Breast epithelium (tissue), 4 donors: ENCODE measurements at regions of chr2 and their contacts with region 1.

Region 1: DNA sequence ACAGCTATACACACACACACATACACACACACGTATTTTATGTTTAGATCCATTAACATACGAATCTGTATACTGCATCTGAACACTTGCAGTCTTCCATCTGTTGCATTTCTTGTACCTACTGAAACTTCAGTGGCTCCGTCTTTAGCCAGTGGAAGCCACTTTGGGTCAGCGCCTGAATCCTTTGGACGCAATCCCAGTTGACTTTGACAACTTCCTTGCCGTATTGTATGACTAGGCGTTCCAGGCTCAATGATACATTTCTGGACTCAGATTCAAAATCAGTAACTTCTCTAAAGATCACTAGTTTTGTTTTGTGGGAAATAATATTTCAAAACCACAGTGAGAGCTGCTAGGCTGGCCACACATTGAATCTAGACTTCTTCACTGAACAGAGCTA is 101.5 kb upstream of the GPC1 start:
- DNase-seq: no peak
- H3K4me3 ChIP-seq: no peak overlapping the region
- H3K27ac ChIP-seq: no peak overlapping the region
- H3K4me1 ChIP-seq: no peaks in the 10 kb centered on the region
- H3K27me3 ChIP-seq: no peaks in the 10 kb centered on the region
- CTCF ChIP-seq: no peak
- POLR2A ChIP-seq: no peak

Region 2: DNA sequence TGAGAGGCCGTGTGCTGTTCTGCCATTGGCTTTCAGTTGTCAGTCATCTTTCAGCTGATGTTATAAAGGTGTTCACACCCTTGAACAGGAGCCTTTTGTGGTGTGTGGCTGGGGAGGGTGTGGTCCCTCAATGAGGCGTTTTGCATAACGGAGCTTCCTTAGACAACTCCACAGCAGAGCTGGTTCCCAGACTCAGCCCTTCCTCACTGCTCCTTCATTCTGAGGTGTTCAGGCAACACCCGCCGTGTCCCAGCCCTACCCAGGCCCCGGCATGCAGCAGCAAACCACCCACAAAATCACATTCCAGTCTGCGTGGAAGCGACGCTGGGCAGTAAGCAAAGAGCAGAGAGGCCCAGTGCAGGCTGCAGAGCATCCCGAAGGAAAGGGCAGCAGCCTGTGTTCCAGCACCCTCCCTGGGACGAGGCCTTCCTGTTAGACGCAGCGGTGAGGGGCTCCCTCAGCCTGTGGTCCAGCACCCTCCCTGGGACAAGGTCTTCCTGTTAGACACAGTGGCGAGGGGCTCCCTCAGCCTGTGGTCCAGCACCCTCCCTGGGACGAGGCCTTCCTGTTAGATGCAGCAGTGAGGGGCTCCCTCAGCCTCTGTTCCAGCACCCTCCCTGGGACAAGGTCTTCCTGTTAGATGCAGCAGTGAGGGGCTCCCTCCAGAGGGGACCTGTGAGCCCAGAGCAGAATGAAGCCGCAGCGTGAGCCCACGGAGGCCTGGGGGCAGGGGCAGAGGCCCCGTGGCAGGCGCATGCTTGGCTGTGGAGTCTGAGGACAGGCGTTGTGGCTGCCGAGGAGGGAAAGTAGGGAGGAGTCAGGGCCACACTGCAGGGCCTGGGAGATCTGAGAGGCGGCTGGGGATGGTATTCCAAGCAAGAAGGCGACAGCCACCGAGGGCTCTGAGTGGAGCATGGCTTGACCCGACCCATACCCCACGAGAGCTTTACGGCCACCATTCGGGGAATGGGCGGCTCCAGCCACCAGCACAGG is 731.4 kb before region 1 on chr2:
- intact Hi-C with region 1: loop called (anchors 5 kb)
- DNase-seq: peak in 1 of 2 donors; percentile 25
- H3K4me3 ChIP-seq: no peak overlapping the region
- H3K27ac ChIP-seq: no peak overlapping the region
- H3K4me1 ChIP-seq: no peaks in the 10 kb centered on the region
- H3K27me3 ChIP-seq: no peaks in the 10 kb centered on the region
- CTCF ChIP-seq: no peak
- POLR2A ChIP-seq: no peak